ENCODE measurements at regions of chr10 and their contacts with region 1.

Region 1: GRCh38 chr10:15168781-15169554 is 475 bp upstream of the NMT2 start:
- DNase-seq: peak; percentile 94
- ATAC-seq: peak; percentile 87
- H3K4me3 ChIP-seq: peak overlapping the region in 4 of 5 experiments; percentile 19 to 52 (median 32)
- H3K4me3 Mint-ChIP-seq: peak overlapping the region; percentile 59
- H3K27ac ChIP-seq: no peak overlapping the region
- H3K27ac Mint-ChIP-seq: no peak overlapping the region
- H3K4me1 ChIP-seq: peaks cover 21 to 24% of the 10 kb centered on the region in 2 donors
- H3K4me1 Mint-ChIP-seq: peaks cover 29% of the 10 kb centered on the region
- H3K27me3 ChIP-seq: no peaks in the 10 kb centered on the region
- H3K27me3 Mint-ChIP-seq: peaks cover 7% of the 10 kb centered on the region
- CTCF ChIP-seq: no peak

Region 2: GRCh38 chr10:14878266-14879054 is 290.5 kb before region 1 on chr10 and contains the start of gene SUV39H2:
- CTCF ChIA-PET with region 1: no interaction called
- POLR2A ChIA-PET with region 1: no interaction called
- intact Hi-C with region 1: loop called (anchors 5 kb)
- DNase-seq: peak; percentile 96
- ATAC-seq: peak; percentile 92
- H3K4me3 ChIP-seq: peak within 1 kb of the TSS; percentile 53 to 98 (median 94)
- H3K4me3 Mint-ChIP-seq: peak within 1 kb of the TSS; percentile 96
- H3K27ac ChIP-seq: peak within 1 kb of the TSS; percentile 64 to 80
- H3K27ac Mint-ChIP-seq: peak within 1 kb of the TSS; percentile 87
- H3K4me1 ChIP-seq: peaks cover 17 to 23% of the 10 kb centered on the region in 2 donors
- H3K4me1 Mint-ChIP-seq: peaks cover 28% of the 10 kb centered on the region
- H3K27me3 ChIP-seq: peaks cover 0 to 6% (median 0%) of the 10 kb centered on the region in 4 experiments
- H3K27me3 Mint-ChIP-seq: no peaks in the 10 kb centered on the region
- CTCF ChIP-seq: no peak
- total RNA-seq, gene SUV39H2: 3.2 and 3.5 TPM in 2 replicates

Region 3: GRCh38 chr10:15088428-15089261 is 80.3 kb before region 1 on chr10 and contains the start of gene ACBD7:
- CTCF ChIA-PET with region 1: no interaction called
- POLR2A ChIA-PET with region 1: no interaction called
- intact Hi-C with region 1: loop called (anchors 2 kb)
- DNase-seq: peak; percentile 88
- ATAC-seq: peak; percentile 100
- H3K4me3 ChIP-seq: peak within 1 kb of the TSS in 4 of 5 experiments; percentile 44 to 61 (median 56)
- H3K4me3 Mint-ChIP-seq: peak within 1 kb of the TSS; percentile 87
- H3K27ac ChIP-seq: no peak within 1 kb of the TSS
- H3K27ac Mint-ChIP-seq: no peak within 1 kb of the TSS
- H3K4me1 ChIP-seq: peaks cover 0 to 9% of the 10 kb centered on the region in 2 donors
- H3K4me1 Mint-ChIP-seq: peaks cover 3% of the 10 kb centered on the region
- H3K27me3 ChIP-seq: no peaks in the 10 kb centered on the region
- H3K27me3 Mint-ChIP-seq: no peaks in the 10 kb centered on the region
- CTCF ChIP-seq: peak; percentile 53
- total RNA-seq, gene ACBD7: 0.54 and 1.3 TPM in 2 replicates

Region 4: DNA sequence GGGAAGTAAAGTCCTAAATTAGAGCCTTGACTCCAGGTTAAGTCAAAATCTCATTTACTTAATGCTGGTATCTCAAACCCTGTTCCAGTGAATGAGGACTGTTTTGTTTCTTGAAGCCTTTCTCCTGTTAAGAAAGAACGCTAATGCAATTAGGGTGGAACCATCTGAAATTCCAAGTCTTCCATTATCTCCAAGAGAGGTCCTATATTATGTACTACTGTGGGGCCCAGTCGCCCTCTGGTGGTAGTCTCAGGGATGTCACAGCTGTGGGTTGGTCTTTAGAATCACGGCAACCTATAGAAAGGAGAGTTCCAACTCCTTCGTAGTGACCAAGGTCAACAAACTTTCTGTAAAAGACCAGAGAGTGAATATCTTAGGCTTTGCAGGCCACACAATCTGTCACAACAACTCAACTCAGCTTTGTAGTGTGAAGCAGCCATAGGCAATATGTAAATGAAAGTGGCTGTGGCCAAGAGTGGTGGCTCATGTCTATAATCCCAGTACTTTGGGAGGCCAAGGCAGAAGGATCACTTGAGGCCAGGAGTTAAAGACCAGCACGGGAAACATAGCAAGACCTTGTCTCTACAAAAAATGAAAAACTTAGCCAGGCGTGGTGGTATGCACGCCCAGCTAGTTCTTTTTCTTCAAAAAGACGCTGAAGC is 62.5 kb before region 1 on chr10:
- CTCF ChIA-PET with region 1: interaction called, 21 read pairs
- POLR2A ChIA-PET with region 1: interaction called, 3 read pairs
- intact Hi-C with region 1: loop called (anchors 2 kb)
- DNase-seq: peak; percentile 76
- ATAC-seq: peak; percentile 96
- H3K4me3 ChIP-seq: no peak overlapping the region
- H3K4me3 Mint-ChIP-seq: no peak overlapping the region
- H3K27ac ChIP-seq: peak overlapping the region in 1 of 2 donors; percentile 10
- H3K27ac Mint-ChIP-seq: peak overlapping the region; percentile 43
- H3K4me1 ChIP-seq: peaks cover 0 to 3% of the 10 kb centered on the region in 2 donors
- H3K4me1 Mint-ChIP-seq: peaks cover 6% of the 10 kb centered on the region
- H3K27me3 ChIP-seq: no peaks in the 10 kb centered on the region
- H3K27me3 Mint-ChIP-seq: no peaks in the 10 kb centered on the region
- CTCF ChIP-seq: peak; percentile 92

Region 5: DNA sequence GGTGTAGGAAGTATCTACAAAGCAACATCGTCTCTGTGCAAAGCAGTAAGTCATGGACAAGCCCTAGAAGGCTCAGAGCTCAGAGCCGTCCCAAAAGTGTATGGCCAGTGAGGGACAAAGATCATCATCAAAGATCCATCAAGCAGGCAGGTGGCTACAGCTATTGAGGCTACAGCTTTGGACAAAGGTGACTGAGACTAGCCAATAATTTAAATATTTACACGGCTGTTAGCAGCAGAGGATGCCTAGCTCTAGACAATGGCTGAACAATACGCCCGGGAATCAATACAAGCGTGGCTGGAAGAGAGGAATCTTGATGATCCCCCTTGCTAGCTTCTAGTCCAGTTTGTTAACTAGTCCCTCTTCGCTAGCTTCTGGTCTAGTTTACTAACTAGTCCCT is 18.4 kb before region 1 on chr10:
- CTCF ChIA-PET with region 1: interaction called, 13 read pairs
- POLR2A ChIA-PET with region 1: interaction called, 3 read pairs
- intact Hi-C with region 1: no loop called
- DNase-seq: no peak
- ATAC-seq: no peak
- H3K4me3 ChIP-seq: no peak overlapping the region
- H3K4me3 Mint-ChIP-seq: no peak overlapping the region
- H3K27ac ChIP-seq: no peak overlapping the region
- H3K27ac Mint-ChIP-seq: no peak overlapping the region
- H3K4me1 ChIP-seq: no peaks in the 10 kb centered on the region
- H3K4me1 Mint-ChIP-seq: no peaks in the 10 kb centered on the region
- H3K27me3 ChIP-seq: no peaks in the 10 kb centered on the region
- H3K27me3 Mint-ChIP-seq: no peaks in the 10 kb centered on the region
- CTCF ChIP-seq: no peak

Region 6: DNA sequence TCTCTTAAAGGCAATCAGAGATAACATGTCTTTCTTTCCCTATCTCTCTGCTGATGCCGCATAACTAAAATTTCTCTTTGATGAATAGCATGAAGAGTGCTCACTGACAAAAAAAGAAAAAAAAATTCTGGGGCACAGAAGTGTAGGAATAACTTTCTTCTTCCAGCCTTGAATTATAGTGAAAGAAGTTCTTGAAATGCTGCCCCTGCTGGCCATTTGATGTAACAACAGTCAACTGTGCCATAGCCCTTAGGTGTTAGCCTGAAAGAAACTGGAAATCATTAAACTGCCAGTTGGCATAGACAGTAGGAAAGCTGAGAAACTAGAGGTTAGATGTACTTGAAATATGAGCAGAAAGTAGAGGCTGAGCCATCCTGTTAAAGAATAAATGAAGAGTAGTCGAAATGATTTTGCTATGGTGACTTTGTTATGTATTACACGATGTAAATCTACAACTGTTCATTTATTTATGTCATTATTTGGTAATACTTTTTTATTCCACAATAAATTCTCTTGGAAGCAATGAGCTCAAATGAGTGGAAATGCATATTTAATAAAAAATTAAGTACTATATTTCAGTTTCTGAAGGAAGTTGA is 250.4 kb after region 1 on chr10:
- CTCF ChIA-PET with region 1: no interaction called
- POLR2A ChIA-PET with region 1: no interaction called
- intact Hi-C with region 1: no loop called
- DNase-seq: peak; percentile 41
- ATAC-seq: no peak
- H3K4me3 ChIP-seq: no peak overlapping the region
- H3K4me3 Mint-ChIP-seq: no peak overlapping the region
- H3K27ac ChIP-seq: no peak overlapping the region
- H3K27ac Mint-ChIP-seq: no peak overlapping the region
- H3K4me1 ChIP-seq: no peaks in the 10 kb centered on the region
- H3K4me1 Mint-ChIP-seq: no peaks in the 10 kb centered on the region
- H3K27me3 ChIP-seq: no peaks in the 10 kb centered on the region
- H3K27me3 Mint-ChIP-seq: peaks cover 5% of the 10 kb centered on the region
- CTCF ChIP-seq: peak; percentile 93

Measured in B cell (primary cell).